HEK293 (cell line): ENCODE measurements at regions of chr2 and their contacts with region 1.

Region 1: GRCh38 chr2:159795841-159796690 is 1.9 kb downstream of the CD302 start:
- H3K4me3 ChIP-seq: no peak overlapping the region
- H3K27ac ChIP-seq: no peak overlapping the region
- H3K4me1 ChIP-seq: peaks cover 10% of the 10 kb centered on the region
- CTCF ChIP-seq: no peak

Region 2: GRCh38 chr2:159807183-159808031 is 11.3 kb after region 1 on chr2:
- CTCF ChIA-PET with region 1: interaction called, 14 read pairs
- POLR2A ChIA-PET with region 1: no interaction called
- H3K4me3 ChIP-seq: no peak overlapping the region
- H3K27ac ChIP-seq: no peak overlapping the region
- H3K4me1 ChIP-seq: no peaks in the 10 kb centered on the region
- CTCF ChIP-seq: peak; percentile 65